Calu3 (cell line): ENCODE measurements at regions of chr7 and their contacts with region 1.

Region 1: GRCh38 chr7:148773334-148773733 is 74.6 kb downstream of the CUL1 start:
- DNase-seq: no peak
- H3K4me3 Mint-ChIP-seq: no peak overlapping the region
- H3K27ac Mint-ChIP-seq: peak overlapping the region; percentile 15
- H3K4me1 Mint-ChIP-seq: peaks cover 13% of the 10 kb centered on the region
- H3K27me3 Mint-ChIP-seq: no peaks in the 10 kb centered on the region
- CTCF ChIP-seq: no peak

Region 2: DNA sequence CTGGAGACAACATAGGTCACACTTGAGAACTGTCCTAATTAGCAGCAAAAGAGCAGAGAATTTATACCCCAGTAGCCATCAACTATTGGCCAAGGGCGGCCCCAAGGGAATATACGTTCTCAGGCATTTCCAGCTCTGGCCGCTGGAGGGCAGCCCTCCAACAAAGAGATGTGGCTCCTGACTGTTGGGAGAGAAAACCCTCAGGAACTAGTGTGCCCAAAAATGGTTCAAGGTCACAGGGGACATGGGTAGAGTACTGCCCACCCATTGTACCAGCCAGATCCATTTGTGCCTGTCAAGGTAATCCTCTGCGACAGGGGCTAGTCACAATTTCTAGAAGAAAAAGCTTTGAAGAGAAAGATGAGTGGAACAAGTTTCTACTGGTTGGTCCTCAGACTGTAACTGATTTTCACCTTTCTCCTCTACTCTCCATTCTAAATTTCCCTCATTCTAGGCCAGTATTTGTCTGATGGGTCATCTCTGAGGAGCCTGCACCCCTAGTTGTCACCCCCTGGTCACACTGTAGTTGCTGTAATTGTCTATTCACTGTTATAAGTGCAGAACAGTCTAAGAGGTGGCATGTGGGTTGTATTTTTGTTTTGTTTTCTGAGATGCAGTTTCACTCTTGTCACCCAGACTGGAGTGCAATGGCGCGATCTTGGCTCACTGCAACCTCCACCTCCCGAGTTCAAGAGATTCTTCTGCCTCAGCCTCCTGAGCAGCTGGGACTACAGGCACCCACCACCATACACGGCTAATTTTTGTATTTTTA is 197.5 kb before region 1 on chr7:
- CTCF ChIA-PET with region 1: no interaction called
- intact Hi-C with region 1: loop called (anchors 10 kb)
- DNase-seq: peak; percentile 71
- H3K4me3 Mint-ChIP-seq: no peak overlapping the region
- H3K27ac Mint-ChIP-seq: no peak overlapping the region
- H3K4me1 Mint-ChIP-seq: no peaks in the 10 kb centered on the region
- H3K27me3 Mint-ChIP-seq: no peaks in the 10 kb centered on the region
- CTCF ChIP-seq: peak; percentile 63

Region 3: GRCh38 chr7:148787571-148788295 is 14.4 kb after region 1 on chr7:
- CTCF ChIA-PET with region 1: no interaction called
- intact Hi-C with region 1: no loop called
- DNase-seq: no peak
- H3K4me3 Mint-ChIP-seq: no peak overlapping the region
- H3K27ac Mint-ChIP-seq: no peak overlapping the region
- H3K4me1 Mint-ChIP-seq: no peaks in the 10 kb centered on the region
- H3K27me3 Mint-ChIP-seq: no peaks in the 10 kb centered on the region
- CTCF ChIP-seq: no peak